CD8-positive, alpha-beta memory T cell (primary cell): ENCODE measurements at regions of chr11 and their contacts with region 1.

Region 1: GRCh38 chr11:61733120-61733978 is 19.1 kb upstream of the MYRF start:
- DNase-seq: peak; percentile 71 to 86 (median 75)
- H3K4me3 ChIP-seq: no peak overlapping the region
- H3K4me3 Mint-ChIP-seq: no peak overlapping the region
- H3K27ac ChIP-seq: no peak overlapping the region
- H3K27ac Mint-ChIP-seq: peak overlapping the region in 5 of 8 donors; percentile 23 to 80 (median 67)
- H3K4me1 ChIP-seq: peaks cover 5% of the 10 kb centered on the region
- H3K4me1 Mint-ChIP-seq: peaks cover 2 to 4% (median 3%) of the 10 kb centered on the region in 3 donors
- H3K27me3 ChIP-seq: no peaks in the 10 kb centered on the region
- H3K27me3 Mint-ChIP-seq: peaks cover 0 to 5% of the 10 kb centered on the region in 2 donors

Region 2: DNA sequence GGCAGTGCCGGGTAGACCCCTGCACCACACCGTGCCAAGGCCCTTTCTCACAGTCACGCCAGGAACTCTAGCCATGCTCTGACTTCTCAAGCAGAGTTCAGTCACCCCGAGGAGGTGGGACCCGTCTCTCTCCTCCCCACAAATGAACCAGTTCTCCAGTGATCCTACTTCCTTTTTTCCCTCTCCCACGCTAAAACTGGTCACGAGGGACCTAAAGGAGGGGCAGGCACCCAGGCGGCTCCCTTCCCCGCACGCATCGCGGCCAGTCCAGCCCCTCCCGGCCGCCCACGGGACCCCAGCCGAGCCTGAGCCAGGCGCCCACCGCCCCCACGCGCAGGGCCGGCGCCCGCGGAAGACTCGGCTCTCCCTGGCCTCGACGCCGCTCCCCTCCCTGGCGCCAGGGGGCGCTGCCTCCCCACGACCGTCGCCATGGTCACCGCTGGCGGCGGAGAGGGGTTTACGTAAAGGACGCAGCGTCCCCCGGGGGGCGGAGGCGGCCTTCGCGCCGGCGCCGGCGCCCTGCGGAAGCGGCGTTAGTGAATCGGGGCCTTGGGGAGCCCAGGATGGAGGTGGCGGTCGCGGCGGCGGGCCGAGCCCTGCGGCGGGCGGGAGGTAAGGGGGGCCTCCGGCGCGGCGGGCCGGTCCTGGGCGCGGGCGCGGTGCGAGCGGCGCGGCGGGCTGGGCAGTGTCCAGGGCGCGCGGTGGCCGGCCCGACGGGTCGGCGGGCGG is 53.3 kb before region 1 on chr11 and contains the start of gene DAGLA:
- CTCF ChIA-PET with region 1: interaction called, 14 read pairs
- POLR2A ChIA-PET with region 1: interaction called, 3 read pairs
- DNase-seq: peak; percentile 69 to 81 (median 73)
- H3K4me3 ChIP-seq: no peak within 1 kb of the TSS
- H3K4me3 Mint-ChIP-seq: peak within 1 kb of the TSS; percentile 23 to 88 (median 66)
- H3K27ac ChIP-seq: no peak within 1 kb of the TSS
- H3K27ac Mint-ChIP-seq: peak within 1 kb of the TSS in 5 of 8 donors; percentile 9 to 85 (median 60)
- H3K4me1 ChIP-seq: peaks cover 16% of the 10 kb centered on the region
- H3K4me1 Mint-ChIP-seq: peaks cover 2 to 5% (median 5%) of the 10 kb centered on the region in 3 donors
- H3K27me3 ChIP-seq: peaks cover 4% of the 10 kb centered on the region
- H3K27me3 Mint-ChIP-seq: peaks cover 12 to 34% of the 10 kb centered on the region in 2 donors
- total RNA-seq, gene DAGLA: 0.11 to 0.20 TPM

Region 3: GRCh38 chr11:61711498-61711897 is 21.9 kb before region 1 on chr11:
- CTCF ChIA-PET with region 1: interaction called, 12 read pairs
- POLR2A ChIA-PET with region 1: no interaction called
- DNase-seq: no peak
- H3K4me3 ChIP-seq: no peak overlapping the region
- H3K4me3 Mint-ChIP-seq: no peak overlapping the region
- H3K27ac ChIP-seq: no peak overlapping the region
- H3K27ac Mint-ChIP-seq: no peak overlapping the region
- H3K4me1 ChIP-seq: no peaks in the 10 kb centered on the region
- H3K4me1 Mint-ChIP-seq: no peaks in the 10 kb centered on the region
- H3K27me3 ChIP-seq: no peaks in the 10 kb centered on the region
- H3K27me3 Mint-ChIP-seq: peaks cover 3 to 6% of the 10 kb centered on the region in 2 donors

Region 4: GRCh38 chr11:61743486-61744095 is 10.2 kb after region 1 on chr11:
- CTCF ChIA-PET with region 1: interaction called, 12 read pairs
- POLR2A ChIA-PET with region 1: no interaction called
- DNase-seq: no peak
- H3K4me3 ChIP-seq: no peak overlapping the region
- H3K4me3 Mint-ChIP-seq: no peak overlapping the region
- H3K27ac ChIP-seq: no peak overlapping the region
- H3K27ac Mint-ChIP-seq: no peak overlapping the region
- H3K4me1 ChIP-seq: no peaks in the 10 kb centered on the region
- H3K4me1 Mint-ChIP-seq: no peaks in the 10 kb centered on the region
- H3K27me3 ChIP-seq: no peaks in the 10 kb centered on the region
- H3K27me3 Mint-ChIP-seq: peaks cover 0 to 3% of the 10 kb centered on the region in 2 donors